Activated CD8-positive, alpha-beta T cell treated with anti-CD3 and anti-CD28 coated beads for 36 hours (primary cell): ENCODE measurements at regions of chr20 and their contacts with region 1.

Region 1: GRCh38 chr20:17569616-17570346 is at the start of gene DSTN:
- DNase-seq: peak; percentile 87
- ATAC-seq: peak; percentile 90
- H3K4me3 Mint-ChIP-seq: peak within 1 kb of the TSS; percentile 83
- H3K27ac Mint-ChIP-seq: peak within 1 kb of the TSS; percentile 81
- H3K4me1 Mint-ChIP-seq: peaks cover 16% of the 10 kb centered on the region
- H3K27me3 Mint-ChIP-seq: peaks cover 2% of the 10 kb centered on the region
- CTCF ChIP-seq: no peak
- total RNA-seq, gene DSTN: 55.5 to 56.4 TPM

Region 2: GRCh38 chr20:17169585-17170136 is 400.1 kb before region 1 on chr20:
- CTCF ChIA-PET with region 1: no interaction called
- POLR2A ChIA-PET with region 1: no interaction called
- intact Hi-C with region 1: no loop called
- DNase-seq: no peak
- ATAC-seq: no peak
- H3K4me3 Mint-ChIP-seq: no peak overlapping the region
- H3K27ac Mint-ChIP-seq: no peak overlapping the region
- H3K4me1 Mint-ChIP-seq: no peaks in the 10 kb centered on the region
- H3K27me3 Mint-ChIP-seq: no peaks in the 10 kb centered on the region
- CTCF ChIP-seq: no peak

Region 3: GRCh38 chr20:17395729-17396128 is 174.1 kb before region 1 on chr20:
- CTCF ChIA-PET with region 1: no interaction called
- POLR2A ChIA-PET with region 1: no interaction called
- intact Hi-C with region 1: no loop called
- DNase-seq: no peak
- ATAC-seq: no peak
- H3K4me3 Mint-ChIP-seq: no peak overlapping the region
- H3K27ac Mint-ChIP-seq: no peak overlapping the region
- H3K4me1 Mint-ChIP-seq: no peaks in the 10 kb centered on the region
- H3K27me3 Mint-ChIP-seq: no peaks in the 10 kb centered on the region
- CTCF ChIP-seq: no peak

Region 4: GRCh38 chr20:17442588-17442987 is 127.2 kb before region 1 on chr20:
- CTCF ChIA-PET with region 1: no interaction called
- POLR2A ChIA-PET with region 1: no interaction called
- intact Hi-C with region 1: no loop called
- DNase-seq: no peak
- ATAC-seq: no peak
- H3K4me3 Mint-ChIP-seq: no peak overlapping the region
- H3K27ac Mint-ChIP-seq: no peak overlapping the region
- H3K4me1 Mint-ChIP-seq: no peaks in the 10 kb centered on the region
- H3K27me3 Mint-ChIP-seq: peaks cover 10% of the 10 kb centered on the region
- CTCF ChIP-seq: no peak

Region 5: DNA sequence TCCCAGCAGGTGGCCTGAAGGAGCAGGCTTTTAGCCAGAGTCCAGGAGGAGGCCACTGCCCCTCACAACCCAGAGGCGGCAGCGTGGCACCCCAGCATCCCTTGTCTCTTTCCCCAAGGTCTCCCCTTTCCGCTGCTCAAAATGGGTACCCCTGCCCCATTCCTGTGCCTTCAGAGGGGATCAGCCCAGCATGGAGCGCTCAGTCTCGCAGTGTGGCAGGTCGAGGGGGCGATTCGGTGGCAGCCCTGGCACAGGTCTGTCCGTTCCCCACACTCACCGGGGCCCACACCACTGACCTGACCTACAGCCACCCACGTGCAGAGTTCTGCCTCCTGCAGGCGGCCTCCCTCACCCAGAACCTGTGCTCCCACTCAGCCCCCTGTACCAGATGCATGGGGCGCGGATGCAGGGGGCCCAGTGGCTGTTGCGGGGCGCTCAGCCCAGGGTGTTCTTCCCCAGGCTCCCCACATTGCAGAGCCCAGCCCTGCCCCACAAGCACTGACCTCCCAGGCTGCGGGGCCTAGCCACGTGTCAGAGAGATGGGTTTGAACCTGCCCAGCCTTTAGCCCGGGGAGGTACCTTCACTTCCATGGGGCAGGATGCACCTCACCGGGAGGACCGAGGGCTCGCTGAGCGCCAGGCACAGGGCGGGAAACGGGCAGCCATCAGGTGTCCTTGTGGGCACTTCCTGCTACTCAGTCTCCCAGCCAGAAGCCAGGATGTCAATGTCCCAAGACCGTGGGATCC is 41.9 kb after region 1 on chr20:
- CTCF ChIA-PET with region 1: interaction called, 15 read pairs
- POLR2A ChIA-PET with region 1: interaction called, 4 read pairs
- intact Hi-C with region 1: no loop called
- DNase-seq: peak; percentile 58
- ATAC-seq: peak; percentile 3
- H3K4me3 Mint-ChIP-seq: peak overlapping the region; percentile 44
- H3K27ac Mint-ChIP-seq: peak overlapping the region; percentile 90
- H3K4me1 Mint-ChIP-seq: peaks cover 36% of the 10 kb centered on the region
- H3K27me3 Mint-ChIP-seq: no peaks in the 10 kb centered on the region
- CTCF ChIP-seq: peak; percentile 73

Region 6: GRCh38 chr20:17782768-17783167 is 213.0 kb after region 1 on chr20:
- CTCF ChIA-PET with region 1: no interaction called
- POLR2A ChIA-PET with region 1: no interaction called
- intact Hi-C with region 1: no loop called
- DNase-seq: no peak
- ATAC-seq: no peak
- H3K4me3 Mint-ChIP-seq: no peak overlapping the region
- H3K27ac Mint-ChIP-seq: no peak overlapping the region
- H3K4me1 Mint-ChIP-seq: peaks cover 3% of the 10 kb centered on the region
- H3K27me3 Mint-ChIP-seq: no peaks in the 10 kb centered on the region
- CTCF ChIP-seq: no peak